Posterior vena cava (tissue), 2 donors: ENCODE measurements at regions of chr3 and their contacts with region 1.

Region 1: GRCh38 chr3:141360888-141361598 is 7.3 kb upstream of the ZBTB38 start:
- DNase-seq: no peak

Region 2: DNA sequence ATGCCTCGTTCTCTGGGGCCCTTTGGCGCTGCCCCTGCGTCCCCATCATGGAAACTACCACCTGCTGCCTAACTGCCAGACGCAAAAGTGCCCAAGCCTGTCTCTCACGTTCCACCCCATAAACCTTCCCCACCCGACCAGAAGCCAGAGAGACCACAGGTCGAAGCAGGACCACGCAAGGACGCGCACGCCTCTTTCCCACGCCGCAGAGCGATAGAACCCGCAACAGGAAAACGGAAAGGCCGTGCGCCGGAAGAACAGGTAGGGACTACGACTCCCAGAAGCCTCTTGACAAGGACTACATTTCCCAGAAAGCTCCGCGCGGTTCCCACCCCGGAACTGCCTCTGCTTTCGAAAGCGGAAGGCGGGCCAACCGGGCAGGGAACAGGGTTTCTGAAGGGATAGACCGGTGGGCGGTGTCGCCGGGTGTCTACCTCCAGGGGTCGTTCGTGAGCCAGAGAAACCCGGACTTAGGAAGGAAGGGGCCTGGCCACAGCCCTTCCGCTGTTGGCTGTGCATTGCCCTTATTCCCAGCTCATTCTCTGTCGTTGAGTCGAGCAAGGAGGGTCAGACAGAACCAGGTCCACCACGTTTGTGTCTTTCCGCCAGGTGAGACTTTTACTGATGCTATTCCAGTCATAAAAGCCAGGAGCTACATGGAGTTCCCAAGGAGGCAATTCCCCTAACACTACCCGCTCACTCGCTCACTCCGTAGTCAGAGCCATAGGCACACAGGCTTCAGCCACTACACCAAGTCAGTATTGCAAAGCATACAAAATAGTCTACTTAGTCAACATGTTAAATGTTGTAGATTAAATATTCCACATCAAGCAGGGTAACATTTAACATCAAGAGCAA is 49.3 kb before region 1 on chr3:
- intact Hi-C with region 1: loop called in 1 of 2 experiments (anchors 10 kb)
- DNase-seq: peak; percentile 99

Region 3: GRCh38 chr3:141659821-141660613 is 299.0 kb after region 1 on chr3:
- intact Hi-C with region 1: no loop called
- DNase-seq: peak; percentile 87